ENCODE measurements at regions of chr5 and their contacts with region 1.

Region 1: DNA sequence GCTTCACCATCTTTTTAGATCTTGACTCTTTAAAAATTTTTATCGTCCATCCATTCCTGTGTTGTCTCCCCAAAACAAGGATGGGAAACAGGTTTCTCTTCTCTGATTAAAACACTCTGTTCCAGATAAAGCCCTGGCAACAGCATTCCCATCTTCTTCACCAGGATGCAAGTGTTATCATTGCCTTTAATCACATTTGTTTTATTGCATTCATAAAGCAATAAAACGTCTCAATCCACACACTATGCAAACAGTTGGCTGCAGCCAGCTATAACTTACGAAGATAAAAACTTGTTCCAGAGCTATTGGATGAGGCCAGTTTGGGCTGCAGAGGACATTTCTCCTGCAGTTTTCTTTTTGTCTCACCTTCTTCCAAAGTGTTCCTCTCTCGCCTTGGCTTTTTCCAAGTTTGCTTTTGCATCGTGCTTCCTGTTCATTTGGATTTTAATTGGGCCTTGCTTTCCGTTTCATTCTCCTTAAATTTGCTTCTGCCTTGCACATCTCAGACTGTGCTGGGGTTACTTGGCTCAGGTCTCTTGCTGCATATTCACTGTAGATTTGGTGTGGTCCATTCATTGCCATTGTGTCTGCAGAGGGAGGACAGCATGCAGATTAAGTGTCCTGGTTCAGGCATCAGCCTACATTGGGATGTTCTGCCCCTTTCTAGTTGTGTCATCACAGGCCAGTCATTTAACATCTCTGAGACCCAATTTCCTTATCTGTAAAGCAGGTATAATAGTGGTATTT is 136.5 kb upstream of the LIFR start:
- DNase-seq: peak; percentile 27 to 49
- H3K4me3 ChIP-seq: no peak overlapping the region
- H3K4me3 Mint-ChIP-seq: peak overlapping the region; percentile 2
- H3K27ac Mint-ChIP-seq: peak overlapping the region; percentile 17
- H3K4me1 ChIP-seq: peaks cover 63% of the 10 kb centered on the region
- H3K4me1 Mint-ChIP-seq: peaks cover 42% of the 10 kb centered on the region
- H3K27me3 ChIP-seq: no peaks in the 10 kb centered on the region
- H3K27me3 Mint-ChIP-seq: no peaks in the 10 kb centered on the region
- CTCF ChIP-seq: no peak

Region 2: GRCh38 chr5:38707352-38708210 is 14.6 kb after region 1 on chr5:
- CTCF ChIA-PET with region 1: interaction called, 4 read pairs
- POLR2A ChIA-PET with region 1: no interaction called
- intact Hi-C with region 1: loop called (anchors 2 kb)
- DNase-seq: peak; percentile 52 to 77
- H3K4me3 ChIP-seq: no peak overlapping the region
- H3K4me3 Mint-ChIP-seq: peak overlapping the region; percentile 64
- H3K27ac Mint-ChIP-seq: peak overlapping the region; percentile 84
- H3K4me1 ChIP-seq: peaks cover 35% of the 10 kb centered on the region
- H3K4me1 Mint-ChIP-seq: peaks cover 29% of the 10 kb centered on the region
- H3K27me3 ChIP-seq: no peaks in the 10 kb centered on the region
- H3K27me3 Mint-ChIP-seq: no peaks in the 10 kb centered on the region
- CTCF ChIP-seq: no peak